Left cardiac atrium (tissue), 4 donors: ENCODE measurements at regions of chr3 and their contacts with region 1.

Region 1: GRCh38 chr3:16884084-16884747 is 539 bp upstream of the PLCL2 start:
- DNase-seq: peak; percentile 78
- ATAC-seq: peak; percentile 77 to 86

Region 2: DNA sequence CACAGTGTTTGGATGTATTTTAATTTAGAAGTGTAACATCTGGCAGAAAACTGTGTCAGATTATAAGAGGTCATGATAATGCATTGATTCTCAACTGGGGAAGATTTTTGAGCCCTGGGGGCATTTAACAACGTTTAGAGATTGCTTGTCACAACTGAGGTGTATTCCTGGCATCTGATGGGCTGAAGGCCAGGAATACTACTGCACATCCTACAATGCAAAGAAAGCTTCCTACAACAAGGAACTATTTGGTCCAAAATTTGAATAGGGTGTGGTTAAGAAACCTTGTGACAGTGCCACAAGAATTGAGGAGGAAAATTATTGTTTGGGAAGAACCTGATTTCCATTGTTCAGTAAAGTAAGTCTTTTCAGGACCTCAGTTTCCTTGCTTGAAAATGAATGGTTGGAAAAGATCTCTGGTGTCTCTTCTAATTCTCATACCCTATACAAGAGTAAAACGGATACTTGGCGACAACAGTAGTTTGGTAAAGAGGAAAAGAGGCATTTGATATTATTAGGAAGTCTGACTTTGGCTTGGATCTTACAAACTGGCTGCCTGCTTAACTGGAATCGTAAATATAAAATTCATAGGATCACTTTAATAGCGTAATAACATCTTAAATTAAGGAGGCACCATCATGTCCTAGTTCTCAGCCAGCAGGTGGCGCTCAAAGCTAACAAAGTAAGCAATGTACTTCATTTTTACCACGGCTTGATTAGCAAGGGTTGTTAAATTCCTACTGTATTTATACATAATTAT is 283.3 kb before region 1 on chr3:
- intact Hi-C with region 1: loop called in 1 of 2 experiments (anchors 10 kb)
- DNase-seq: peak; percentile 87
- ATAC-seq: peak; percentile 62 to 68

Region 3: DNA sequence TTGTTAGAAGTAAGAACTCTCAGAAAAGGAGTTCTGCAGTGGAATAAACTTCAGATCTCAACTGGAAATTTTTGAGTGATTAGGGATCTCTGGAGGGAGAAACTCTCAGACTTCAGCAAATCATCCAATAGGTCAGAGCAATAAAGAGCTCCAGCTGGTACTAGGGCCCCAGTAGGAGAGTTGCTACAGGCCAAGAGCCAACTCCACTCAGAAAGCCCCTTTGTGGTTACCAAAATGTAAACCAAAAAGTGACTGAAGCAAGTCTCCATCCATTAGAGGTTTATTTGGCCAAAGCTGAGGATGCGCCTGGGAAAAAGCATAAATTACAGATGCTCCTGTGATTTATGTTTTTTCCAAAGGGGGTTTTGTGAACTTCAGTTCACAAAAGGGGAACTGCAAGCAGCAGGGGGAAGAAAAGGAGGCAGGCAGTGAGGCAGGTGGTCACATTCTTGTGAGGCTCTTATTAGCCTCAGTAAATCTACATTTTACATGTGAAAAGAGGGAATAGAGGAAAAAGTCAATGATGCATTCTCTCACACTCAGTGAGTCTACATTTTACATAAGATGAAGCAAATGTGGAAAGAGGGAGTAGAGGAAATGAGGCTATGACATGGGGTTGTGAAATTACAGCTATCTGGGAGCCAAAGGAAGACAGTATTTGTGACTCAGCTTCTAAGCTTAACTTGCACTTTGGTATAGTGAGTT is 186.6 kb before region 1 on chr3:
- intact Hi-C with region 1: loop called in 1 of 2 experiments (anchors 5 kb)
- DNase-seq: no peak
- ATAC-seq: no peak

Region 4: DNA sequence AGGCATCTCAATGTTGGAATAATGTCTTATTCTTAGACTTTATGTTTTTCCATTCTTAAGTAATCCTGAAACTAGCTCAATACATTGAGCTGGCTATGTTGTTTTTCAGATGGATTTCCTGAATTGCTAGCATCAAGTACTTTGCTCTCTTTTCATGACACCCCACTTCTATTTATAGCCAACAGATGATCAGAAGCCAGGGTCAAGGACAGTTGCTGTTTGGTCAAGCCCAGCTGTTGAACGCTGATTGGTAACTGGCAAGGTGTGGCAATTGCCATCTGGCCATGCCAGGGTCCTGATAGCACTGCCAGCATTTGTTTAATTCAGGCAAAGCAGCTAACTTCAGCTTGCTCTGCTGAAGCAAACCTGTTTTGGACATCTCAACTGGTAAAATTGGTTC is 45.7 kb before region 1 on chr3:
- intact Hi-C with region 1: loop called in 1 of 2 experiments (anchors 5 kb)
- DNase-seq: no peak
- ATAC-seq: peak; percentile 47 to 76

Region 5: GRCh38 chr3:16945330-16945729 is 61.1 kb after region 1 on chr3:
- intact Hi-C with region 1: loop called in 1 of 2 experiments (anchors 5 kb)
- DNase-seq: no peak
- ATAC-seq: no peak

Region 6: GRCh38 chr3:17032407-17033034 is 148.3 kb after region 1 on chr3:
- intact Hi-C with region 1: loop called in 1 of 2 experiments (anchors 2 kb)
- DNase-seq: no peak
- ATAC-seq: peak; percentile 64 to 79

Region 7: GRCh38 chr3:17151598-17152373 is 267.6 kb after region 1 on chr3:
- intact Hi-C with region 1: loop called in 1 of 2 experiments (anchors 10 kb)
- DNase-seq: no peak
- ATAC-seq: peak; percentile 40 to 66